ENCODE measurements at regions of chr6 and their contacts with region 1.

Region 1: DNA sequence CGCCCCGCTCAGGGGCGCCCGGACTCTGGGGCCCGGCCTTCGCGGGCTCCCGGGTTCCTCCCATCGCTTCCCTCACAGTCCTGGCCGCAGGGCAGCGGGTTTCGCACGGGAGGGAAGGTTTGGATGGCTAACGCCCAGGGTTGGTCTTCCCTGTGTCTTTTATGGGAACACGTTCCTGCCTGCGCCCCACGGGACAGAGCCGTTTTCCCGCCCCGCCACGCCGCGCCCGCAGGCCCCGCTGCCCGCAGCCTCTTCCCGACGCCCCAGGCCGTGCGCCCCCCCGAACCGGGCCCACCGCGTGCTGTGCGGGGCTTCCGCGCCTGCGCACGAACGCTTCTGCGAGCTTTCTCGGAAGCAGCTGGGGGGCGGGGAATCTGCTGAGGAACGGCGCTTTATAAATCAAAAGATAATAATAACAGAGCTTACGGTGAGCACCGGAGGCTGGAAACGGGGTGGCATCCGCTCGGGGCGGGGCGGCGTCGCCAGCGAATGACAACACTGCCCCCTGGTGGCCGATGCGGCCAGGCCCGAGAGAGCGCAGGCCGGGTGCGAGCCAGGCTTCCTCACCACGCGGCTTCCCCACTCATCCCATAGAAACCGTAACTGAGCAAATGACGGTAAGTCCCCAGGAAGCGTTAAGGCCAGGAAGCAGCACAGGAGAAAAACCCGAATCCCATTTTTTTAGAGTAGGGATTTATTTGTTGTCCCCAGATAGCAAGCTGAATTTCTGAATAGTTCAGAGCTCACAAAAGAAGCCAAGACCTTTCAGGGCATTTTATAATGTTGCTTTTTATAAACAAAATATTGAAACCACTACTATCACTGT is 116.4 kb downstream of the MYLK4 start:
- DNase-seq: peak; percentile 85
- ATAC-seq: peak; percentile 99
- H3K4me3 Mint-ChIP-seq: peak overlapping the region; percentile 55
- H3K27ac Mint-ChIP-seq: no peak overlapping the region
- H3K4me1 Mint-ChIP-seq: peaks cover 4% of the 10 kb centered on the region
- H3K27me3 Mint-ChIP-seq: peaks cover 17% of the 10 kb centered on the region

Region 2: GRCh38 chr6:1596088-1596852 is 1038.1 kb before region 1 on chr6:
- CTCF ChIA-PET with region 1: interaction called, 25 read pairs
- POLR2A ChIA-PET with region 1: no interaction called
- DNase-seq: peak; percentile 70
- ATAC-seq: peak; percentile 72
- H3K4me3 Mint-ChIP-seq: no peak overlapping the region
- H3K27ac Mint-ChIP-seq: no peak overlapping the region
- H3K4me1 Mint-ChIP-seq: peaks cover 3% of the 10 kb centered on the region
- H3K27me3 Mint-ChIP-seq: peaks cover 58% of the 10 kb centered on the region

Region 3: GRCh38 chr6:2353412-2354137 is 280.8 kb before region 1 on chr6:
- CTCF ChIA-PET with region 1: interaction called, 13 read pairs
- POLR2A ChIA-PET with region 1: no interaction called
- DNase-seq: peak; percentile 68
- ATAC-seq: no peak
- H3K4me3 Mint-ChIP-seq: no peak overlapping the region
- H3K27ac Mint-ChIP-seq: no peak overlapping the region
- H3K4me1 Mint-ChIP-seq: no peaks in the 10 kb centered on the region
- H3K27me3 Mint-ChIP-seq: no peaks in the 10 kb centered on the region

Region 4: DNA sequence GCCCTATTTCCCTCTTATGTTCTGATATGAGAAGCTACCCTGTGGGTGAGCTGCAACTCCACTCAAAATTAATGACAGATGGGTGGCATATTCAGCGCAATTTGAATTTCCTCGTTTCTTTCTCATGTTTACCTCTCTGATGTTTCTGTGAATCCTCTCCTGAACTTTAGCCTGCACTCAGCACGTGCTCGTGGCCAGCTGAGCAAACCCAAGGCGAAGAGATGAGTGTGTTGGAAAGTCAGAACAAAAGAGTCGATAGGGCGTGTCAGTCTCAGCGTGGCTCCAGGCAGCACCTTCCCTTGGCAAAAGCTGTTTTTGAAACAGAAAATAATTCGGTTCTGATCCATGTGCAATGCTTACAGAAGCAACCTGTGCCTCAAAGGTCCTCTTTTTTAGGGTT is 162.9 kb before region 1 on chr6:
- CTCF ChIA-PET with region 1: interaction called, 10 read pairs
- POLR2A ChIA-PET with region 1: no interaction called
- DNase-seq: no peak
- ATAC-seq: no peak
- H3K4me3 Mint-ChIP-seq: no peak overlapping the region
- H3K27ac Mint-ChIP-seq: no peak overlapping the region
- H3K4me1 Mint-ChIP-seq: no peaks in the 10 kb centered on the region
- H3K27me3 Mint-ChIP-seq: peaks cover 22% of the 10 kb centered on the region

Region 5: DNA sequence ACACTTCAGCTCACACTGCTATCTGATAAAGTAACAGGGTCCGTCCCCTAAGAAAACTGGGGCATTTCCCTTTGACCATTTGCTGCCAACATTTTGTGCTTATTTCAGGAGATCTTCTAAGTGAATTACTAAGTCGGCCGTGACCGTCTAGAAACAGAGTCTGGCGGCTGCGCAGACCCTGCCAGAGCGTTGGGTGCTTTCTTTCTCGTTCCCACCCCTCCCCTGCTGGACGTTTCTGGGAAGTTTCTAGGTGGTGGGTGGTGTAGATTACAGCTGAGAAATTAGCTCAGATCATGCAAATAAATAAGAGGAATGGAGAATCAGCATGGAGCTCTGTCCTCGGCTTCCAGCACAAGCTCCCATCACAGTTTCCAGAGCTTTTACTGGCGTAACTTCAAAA is 11.7 kb before region 1 on chr6:
- CTCF ChIA-PET with region 1: interaction called, 13 read pairs
- POLR2A ChIA-PET with region 1: no interaction called
- DNase-seq: no peak
- ATAC-seq: no peak
- H3K4me3 Mint-ChIP-seq: no peak overlapping the region
- H3K27ac Mint-ChIP-seq: no peak overlapping the region
- H3K4me1 Mint-ChIP-seq: no peaks in the 10 kb centered on the region
- H3K27me3 Mint-ChIP-seq: peaks cover 23% of the 10 kb centered on the region

Region 6: DNA sequence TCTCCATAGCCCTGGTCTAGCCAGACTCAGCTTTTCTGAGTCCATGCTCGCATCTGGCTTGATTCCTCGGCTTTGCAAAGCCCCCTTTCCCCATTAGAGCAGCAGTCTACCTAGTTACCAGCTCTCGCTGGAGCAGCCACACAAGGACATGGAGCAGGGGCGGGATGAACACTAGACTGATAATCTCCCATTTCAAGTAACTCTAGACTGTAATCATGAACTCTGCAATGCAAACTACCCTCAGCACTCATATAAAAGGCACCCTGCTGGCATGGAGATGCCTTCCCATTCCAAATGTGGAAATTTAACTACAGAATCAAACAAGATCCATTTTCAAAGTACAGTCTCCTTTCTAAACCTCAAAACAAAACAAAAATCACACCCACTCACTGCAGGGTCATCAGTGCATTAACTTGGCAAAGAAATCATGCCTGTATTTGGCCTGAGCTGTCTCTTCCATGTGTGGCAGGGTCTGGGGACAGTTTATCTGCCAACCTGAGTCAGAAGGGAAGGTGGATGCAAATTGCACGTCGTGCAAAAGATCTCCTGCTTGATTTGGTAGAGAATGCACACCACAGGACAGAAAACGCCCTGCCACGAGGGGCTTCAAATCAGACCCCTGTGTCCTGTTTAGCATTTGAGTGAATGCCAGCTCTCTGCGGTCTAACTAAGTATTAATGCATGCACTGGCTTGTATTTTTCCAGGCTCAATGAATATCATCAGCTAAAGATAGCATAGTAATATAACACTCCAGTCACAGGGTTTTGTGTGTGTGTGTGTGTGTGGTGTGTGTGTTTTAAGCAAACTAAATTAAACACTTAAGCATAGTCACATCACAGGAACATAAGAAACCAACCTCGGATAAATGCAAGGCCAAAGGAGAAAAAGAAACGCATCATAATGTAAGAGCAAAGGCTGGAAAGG is 31.1 kb after region 1 on chr6:
- CTCF ChIA-PET with region 1: no interaction called
- POLR2A ChIA-PET with region 1: no interaction called
- DNase-seq: no peak
- ATAC-seq: no peak
- H3K4me3 Mint-ChIP-seq: no peak overlapping the region
- H3K27ac Mint-ChIP-seq: no peak overlapping the region
- H3K4me1 Mint-ChIP-seq: no peaks in the 10 kb centered on the region
- H3K27me3 Mint-ChIP-seq: peaks cover 4% of the 10 kb centered on the region